ENCODE measurements at regions of chr4 and their contacts with region 1.

Region 1: DNA sequence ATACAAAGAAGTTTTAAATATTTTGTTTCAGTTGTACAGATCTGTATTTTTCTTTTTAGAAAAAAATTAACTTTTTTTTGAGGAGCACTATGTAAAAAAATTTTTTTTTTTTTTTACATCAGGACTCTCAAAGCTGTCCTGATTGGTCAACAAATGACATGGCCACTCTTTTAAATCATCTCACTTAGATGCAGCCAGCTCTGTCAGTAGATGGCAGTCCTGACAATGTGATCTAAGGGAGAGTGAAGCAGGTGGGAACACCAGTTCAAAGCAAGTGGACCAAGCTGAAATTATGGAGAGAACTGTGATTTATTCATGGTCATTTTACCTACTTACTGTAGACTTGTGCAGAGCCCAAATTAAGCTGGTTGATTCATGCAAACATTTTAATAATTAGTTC is 174.6 kb upstream of the GPRIN3 start:
- DNase-seq: peak; percentile 76
- H3K4me3 Mint-ChIP-seq: no peak overlapping the region
- H3K27ac Mint-ChIP-seq: no peak overlapping the region
- H3K4me1 Mint-ChIP-seq: no peaks in the 10 kb centered on the region
- H3K27me3 Mint-ChIP-seq: no peaks in the 10 kb centered on the region
- CTCF ChIP-seq: peak; percentile 18

Region 2: DNA sequence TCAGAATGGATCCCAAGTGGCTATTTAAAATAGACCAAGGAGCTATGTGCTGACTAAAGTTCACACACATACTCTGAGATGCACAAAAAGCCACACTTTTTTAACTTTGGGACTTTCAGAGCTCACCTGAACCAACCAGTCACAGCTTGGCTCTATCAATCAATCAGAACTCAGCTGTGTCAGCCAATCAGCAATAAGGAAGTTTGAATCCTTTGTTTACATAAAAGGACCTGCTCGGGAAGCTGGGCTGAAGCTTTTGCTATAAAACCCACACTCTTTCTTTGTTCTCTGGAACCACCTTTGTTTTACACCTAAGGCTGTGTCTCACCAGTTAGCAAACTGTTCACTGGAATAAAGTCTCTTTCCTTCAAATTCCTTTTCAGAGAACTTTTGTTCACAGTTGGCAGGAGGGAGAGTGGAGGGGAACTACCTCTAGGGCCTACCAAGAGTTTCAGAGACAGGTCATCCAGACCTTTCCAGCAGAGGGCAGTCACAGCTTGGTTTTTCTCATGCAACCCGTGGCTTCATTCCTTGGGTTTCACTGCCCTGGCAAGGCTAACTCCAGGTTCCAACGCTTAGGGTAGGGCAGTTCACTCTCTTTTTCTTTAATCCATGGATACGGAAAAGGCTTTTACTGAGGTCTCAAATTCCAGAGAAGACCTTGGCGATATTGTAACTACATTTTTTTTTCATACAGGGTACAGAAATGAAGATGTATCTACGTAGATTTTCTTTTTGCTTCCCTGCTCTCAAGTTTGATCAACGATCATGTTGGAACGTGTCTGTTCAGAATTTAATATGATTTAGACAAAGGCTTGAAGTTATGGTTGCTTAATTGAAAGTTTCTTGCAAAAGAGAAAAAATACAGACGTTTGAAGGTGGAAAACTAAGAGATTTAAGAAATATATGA is 255.3 kb before region 1 on chr4:
- CTCF ChIA-PET with region 1: interaction called, 4 read pairs
- POLR2A ChIA-PET with region 1: no interaction called
- intact Hi-C with region 1: loop called (anchors 1 kb)
- DNase-seq: peak; percentile 88
- H3K4me3 Mint-ChIP-seq: no peak overlapping the region
- H3K27ac Mint-ChIP-seq: no peak overlapping the region
- H3K4me1 Mint-ChIP-seq: peaks cover 5% of the 10 kb centered on the region
- H3K27me3 Mint-ChIP-seq: no peaks in the 10 kb centered on the region
- CTCF ChIP-seq: peak; percentile 65

Region 3: GRCh38 chr4:89586864-89587263 is 104.6 kb after region 1 on chr4:
- CTCF ChIA-PET with region 1: interaction called, 11 read pairs
- POLR2A ChIA-PET with region 1: interaction called, 3 read pairs
- intact Hi-C with region 1: no loop called
- DNase-seq: peak; percentile 24
- H3K4me3 Mint-ChIP-seq: no peak overlapping the region
- H3K27ac Mint-ChIP-seq: no peak overlapping the region
- H3K4me1 Mint-ChIP-seq: no peaks in the 10 kb centered on the region
- H3K27me3 Mint-ChIP-seq: no peaks in the 10 kb centered on the region
- CTCF ChIP-seq: peak; percentile 13

Region 4: GRCh38 chr4:89868999-89869589 is 386.8 kb after region 1 on chr4:
- CTCF ChIA-PET with region 1: interaction called, 5 read pairs
- POLR2A ChIA-PET with region 1: no interaction called
- intact Hi-C with region 1: loop called (anchors 1 kb)
- DNase-seq: peak; percentile 14
- H3K4me3 Mint-ChIP-seq: no peak overlapping the region
- H3K27ac Mint-ChIP-seq: no peak overlapping the region
- H3K4me1 Mint-ChIP-seq: no peaks in the 10 kb centered on the region
- H3K27me3 Mint-ChIP-seq: no peaks in the 10 kb centered on the region
- CTCF ChIP-seq: peak; percentile 47

Region 5: DNA sequence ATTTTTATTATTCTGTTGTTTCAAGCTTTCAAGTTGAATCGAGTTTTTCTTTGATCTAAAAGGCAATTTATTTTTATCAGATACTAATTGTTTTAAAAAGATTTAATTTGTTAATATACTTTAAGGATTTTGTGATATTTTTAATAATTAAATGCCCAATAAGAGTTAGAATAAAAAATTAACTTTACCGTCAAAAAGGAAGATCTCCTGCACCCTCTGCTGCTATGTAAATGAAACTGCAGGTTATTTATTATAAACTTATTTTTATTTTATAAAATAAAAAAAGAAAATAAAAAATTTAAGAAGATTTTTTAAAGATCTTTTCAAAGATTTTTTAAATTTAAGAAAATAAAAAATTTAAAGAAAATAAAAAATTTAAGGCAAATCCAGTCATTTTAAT is 811.1 kb after region 1 on chr4:
- CTCF ChIA-PET with region 1: no interaction called
- POLR2A ChIA-PET with region 1: no interaction called
- intact Hi-C with region 1: loop called (anchors 5 kb)
- DNase-seq: no peak
- H3K4me3 Mint-ChIP-seq: no peak overlapping the region
- H3K27ac Mint-ChIP-seq: no peak overlapping the region
- H3K4me1 Mint-ChIP-seq: no peaks in the 10 kb centered on the region
- H3K27me3 Mint-ChIP-seq: no peaks in the 10 kb centered on the region
- CTCF ChIP-seq: peak; percentile 54

Measured in MCF 10A (cell line).